ENCODE measurements at regions of chr4 and their contacts with region 1.

Region 1: GRCh38 chr4:126271292-126271691 is 956.5 kb downstream of the FAT4 start:
- DNase-seq: no peak

Region 2: GRCh38 chr4:125486351-125486750 is 784.9 kb before region 1 on chr4:
- intact Hi-C with region 1: loop called in 1 of 2 experiments (anchors 5 kb)
- DNase-seq: no peak

Region 3: DNA sequence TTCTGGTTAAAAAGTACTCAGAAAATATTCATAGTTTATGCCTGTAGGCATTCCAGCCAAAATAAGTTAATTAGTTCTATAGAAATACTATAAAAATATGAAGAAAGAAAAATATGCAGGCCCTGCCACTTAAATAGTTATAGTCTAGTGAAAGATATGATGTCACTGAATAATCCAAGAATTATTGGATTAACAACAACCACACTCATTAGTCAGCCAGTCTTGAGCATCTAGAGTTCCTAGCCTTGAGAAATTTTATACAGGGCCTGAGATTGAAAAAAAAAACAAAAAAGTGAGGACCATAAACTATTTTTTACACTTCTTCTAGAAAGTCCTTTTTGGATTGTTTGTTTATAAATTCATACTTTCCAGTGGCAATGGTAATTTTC is 133.5 kb before region 1 on chr4:
- intact Hi-C with region 1: no loop called
- DNase-seq: no peak

Measured in posterior vena cava (tissue), 2 donors.